T-cell (primary cell): ENCODE measurements at regions of chr7 and their contacts with region 1.

Region 1: DNA sequence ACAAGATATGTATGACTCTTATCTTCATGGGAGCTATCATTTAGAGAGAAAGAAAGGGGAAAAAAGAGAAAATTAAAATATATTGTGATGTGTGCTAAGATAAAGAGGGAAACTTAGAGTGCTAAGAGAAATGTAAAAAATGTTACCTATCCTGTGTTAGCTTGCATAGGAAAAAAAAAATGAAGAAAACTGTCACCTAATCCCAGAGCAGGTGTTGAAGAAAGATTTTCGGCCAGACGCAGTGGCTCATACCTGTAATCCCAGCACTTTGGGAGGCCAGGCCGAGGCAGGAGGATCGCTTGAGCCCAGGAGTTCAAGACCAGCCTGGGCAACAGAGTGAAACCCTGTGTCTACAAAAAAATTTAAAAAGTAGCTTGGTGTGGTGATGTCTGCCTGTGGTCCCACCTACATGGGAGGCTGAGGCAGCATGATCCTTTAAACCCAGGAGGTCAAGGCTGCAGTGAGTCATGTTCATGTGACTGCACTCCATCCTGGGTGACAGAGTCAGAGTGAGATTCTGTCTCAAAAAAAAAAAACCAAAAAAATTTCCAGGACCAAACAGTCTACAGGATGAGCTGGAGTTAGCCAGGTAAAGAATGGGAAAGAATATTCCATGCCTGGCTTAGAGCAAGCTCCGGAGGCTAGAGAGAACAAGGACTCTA is 2.4 kb upstream of the MKLN1 start:
- DNase-seq: no peak
- ATAC-seq: no peak
- H3K4me3 ChIP-seq: no peak overlapping the region
- H3K4me3 Mint-ChIP-seq: peak overlapping the region in 2 of 3 donors; percentile 32 to 99
- H3K27ac ChIP-seq: no peak overlapping the region
- H3K27ac Mint-ChIP-seq: peak overlapping the region in 1 of 2 donors; percentile 13
- H3K4me1 ChIP-seq: peaks cover 18 to 22% of the 10 kb centered on the region in 2 experiments
- H3K4me1 Mint-ChIP-seq: peaks cover 56 to 70% (median 59%) of the 10 kb centered on the region in 3 donors
- H3K27me3 ChIP-seq: no peaks in the 10 kb centered on the region
- H3K27me3 Mint-ChIP-seq: no peaks in the 10 kb centered on the region

Region 2: DNA sequence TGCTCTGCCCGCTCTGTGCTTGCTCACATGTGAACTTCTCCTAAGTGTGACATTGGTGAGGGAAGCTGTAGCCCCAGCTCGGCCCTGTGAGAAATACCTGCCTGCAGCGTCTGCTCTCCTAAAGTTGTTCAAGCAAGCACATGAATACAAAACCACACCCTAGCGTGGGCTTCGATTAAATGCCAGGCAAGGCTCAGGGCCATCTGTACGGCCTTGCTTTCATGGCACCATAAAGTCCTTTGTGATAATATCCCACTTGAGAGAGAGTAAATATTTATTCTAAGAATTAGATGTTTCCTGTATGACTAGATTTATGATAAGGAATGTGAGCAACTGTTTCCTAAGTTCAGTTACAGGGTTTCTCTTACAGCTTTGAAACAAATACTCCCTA is 328.5 kb before region 1 on chr7:
- CTCF ChIA-PET with region 1: interaction called in 1 of 2 experiments, 18 read pairs
- POLR2A ChIA-PET with region 1: no interaction called
- DNase-seq: no peak
- ATAC-seq: peak; percentile 24 to 58 (median 52)
- H3K4me3 ChIP-seq: no peak overlapping the region
- H3K4me3 Mint-ChIP-seq: peak overlapping the region; percentile 37 to 60 (median 59)
- H3K27ac ChIP-seq: peak overlapping the region; percentile 62
- H3K27ac Mint-ChIP-seq: peak overlapping the region; percentile 89 to 92
- H3K4me1 ChIP-seq: peaks cover 0 to 62% of the 10 kb centered on the region in 2 experiments
- H3K4me1 Mint-ChIP-seq: peaks cover 70 to 92% (median 86%) of the 10 kb centered on the region in 3 donors
- H3K27me3 ChIP-seq: no peaks in the 10 kb centered on the region
- H3K27me3 Mint-ChIP-seq: no peaks in the 10 kb centered on the region

Region 3: GRCh38 chr7:131400833-131401593 is 75.7 kb after region 1 on chr7:
- CTCF ChIA-PET with region 1: no interaction called
- POLR2A ChIA-PET with region 1: no interaction called
- DNase-seq: no peak
- ATAC-seq: no peak
- H3K4me3 ChIP-seq: no peak overlapping the region
- H3K4me3 Mint-ChIP-seq: no peak overlapping the region
- H3K27ac ChIP-seq: no peak overlapping the region
- H3K27ac Mint-ChIP-seq: peak overlapping the region in 1 of 2 donors; percentile 32
- H3K4me1 ChIP-seq: no peaks in the 10 kb centered on the region
- H3K4me1 Mint-ChIP-seq: peaks cover 11 to 34% (median 25%) of the 10 kb centered on the region in 3 donors
- H3K27me3 ChIP-seq: no peaks in the 10 kb centered on the region
- H3K27me3 Mint-ChIP-seq: no peaks in the 10 kb centered on the region